Activated CD4-positive, alpha-beta T cell treated with anti-CD3 and anti-CD28 coated beads, Interleukin-2, amount 10 ng/mL, durations not matched to agents 24 days and 14 days (primary cell): ENCODE measurements at regions of chr10 and their contacts with region 1.

Region 1: GRCh38 chr10:48981310-48981907 is 41.8 kb upstream of the LRRC18 start:
- DNase-seq: peak; percentile 80
- H3K4me3 Mint-ChIP-seq: no peak overlapping the region
- H3K27ac Mint-ChIP-seq: no peak overlapping the region
- H3K4me1 Mint-ChIP-seq: no peaks in the 10 kb centered on the region
- H3K27me3 Mint-ChIP-seq: no peaks in the 10 kb centered on the region

Region 2: GRCh38 chr10:49164559-49165188 is 183.3 kb after region 1 on chr10:
- intact Hi-C with region 1: loop called (anchors 1 kb)
- DNase-seq: peak; percentile 84
- H3K4me3 Mint-ChIP-seq: no peak overlapping the region
- H3K27ac Mint-ChIP-seq: peak overlapping the region; percentile 12
- H3K4me1 Mint-ChIP-seq: peaks cover 25% of the 10 kb centered on the region
- H3K27me3 Mint-ChIP-seq: peaks cover 2% of the 10 kb centered on the region

Region 3: DNA sequence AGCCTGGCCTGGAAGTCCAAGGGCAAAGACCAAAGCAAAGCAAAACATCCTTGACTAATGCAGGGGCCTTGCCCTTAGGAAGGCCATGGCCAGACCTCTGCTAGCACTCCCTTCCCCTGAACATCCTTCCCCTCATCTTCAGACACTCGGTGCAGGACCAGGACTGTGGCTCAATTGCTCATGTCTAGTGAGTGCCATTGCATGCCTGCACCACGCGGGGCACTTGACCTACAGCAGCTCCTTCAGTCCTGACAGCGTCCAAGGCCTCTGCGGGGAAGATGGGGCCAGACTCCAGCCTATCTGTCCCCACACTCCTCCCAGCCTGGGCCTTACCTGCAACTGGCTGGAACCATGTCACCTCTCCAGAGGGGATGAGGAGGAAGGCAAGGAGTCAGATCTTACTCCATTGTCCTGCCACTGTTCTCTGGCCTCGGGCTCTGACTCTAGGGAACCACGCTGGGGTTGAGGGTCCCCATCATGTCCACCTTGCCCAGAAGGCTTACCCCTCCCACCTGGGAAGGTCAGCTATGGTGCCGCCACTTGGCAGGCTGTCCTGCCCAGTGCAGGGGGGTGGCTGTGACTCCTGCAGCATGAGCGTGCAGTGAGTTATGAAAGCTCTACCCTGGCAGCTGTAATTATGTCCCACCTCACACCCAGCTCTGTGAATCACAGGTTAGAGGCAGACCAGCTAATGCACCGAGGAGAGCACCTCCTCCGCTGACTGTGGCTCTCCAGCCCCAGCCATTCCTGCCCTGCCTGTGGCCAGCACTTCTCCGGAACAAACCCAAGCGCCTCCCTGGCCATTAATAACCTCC is 398.4 kb after region 1 on chr10:
- intact Hi-C with region 1: loop called (anchors 10 kb)
- DNase-seq: no peak
- H3K4me3 Mint-ChIP-seq: no peak overlapping the region
- H3K27ac Mint-ChIP-seq: no peak overlapping the region
- H3K4me1 Mint-ChIP-seq: no peaks in the 10 kb centered on the region
- H3K27me3 Mint-ChIP-seq: peaks cover 3% of the 10 kb centered on the region

Region 4: DNA sequence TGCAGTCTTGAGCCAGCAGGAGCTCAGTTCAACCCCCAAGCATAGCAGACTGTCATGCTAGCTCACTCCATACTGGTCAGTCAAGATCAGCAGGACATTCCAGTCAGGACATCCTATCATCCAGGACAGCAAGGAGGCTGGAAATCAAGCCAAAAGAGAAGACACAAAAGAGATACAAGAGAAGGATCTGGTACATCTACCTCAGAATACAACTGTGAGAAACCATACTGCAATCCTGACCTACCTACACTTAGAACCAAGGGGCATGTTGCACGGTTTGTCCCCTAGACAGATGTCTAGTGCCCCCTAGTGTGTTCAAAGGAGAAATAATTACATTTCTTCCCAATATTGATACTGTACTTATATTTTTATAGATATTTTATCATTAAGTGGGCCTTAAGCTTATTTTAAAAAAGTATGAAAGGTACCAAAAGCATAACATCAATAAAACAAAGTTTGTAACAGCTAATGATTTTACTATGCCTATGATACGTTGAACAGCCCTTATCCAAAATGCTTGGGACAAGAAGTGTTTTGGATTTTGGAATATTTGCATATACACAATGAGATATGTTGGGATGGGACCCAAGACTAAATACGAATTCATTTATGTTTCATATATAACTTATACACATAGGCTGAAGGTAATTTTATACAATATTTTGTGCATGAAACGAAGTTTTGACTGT is 530.9 kb after region 1 on chr10:
- intact Hi-C with region 1: loop called (anchors 1 kb)
- DNase-seq: peak; percentile 72
- H3K4me3 Mint-ChIP-seq: no peak overlapping the region
- H3K27ac Mint-ChIP-seq: no peak overlapping the region
- H3K4me1 Mint-ChIP-seq: peaks cover 14% of the 10 kb centered on the region
- H3K27me3 Mint-ChIP-seq: peaks cover 13% of the 10 kb centered on the region